Aorta (tissue), 5 donors: ENCODE measurements at regions of chr14 and their contacts with region 1.

Region 1: GRCh38 chr14:103628684-103629502 is at the start of gene KLC1:
- DNase-seq: peak; percentile 90 to 96
- ATAC-seq: peak; percentile 92
- H3K4me3 ChIP-seq: peak within 1 kb of the TSS; percentile 84 to 91
- H3K27ac ChIP-seq: peak within 1 kb of the TSS; percentile 87 to 88
- H3K4me1 ChIP-seq: no peaks in the 10 kb centered on the region
- H3K27me3 ChIP-seq: no peaks in the 10 kb centered on the region
- total RNA-seq, gene KLC1: 254 to 315 TPM

Region 2: DNA sequence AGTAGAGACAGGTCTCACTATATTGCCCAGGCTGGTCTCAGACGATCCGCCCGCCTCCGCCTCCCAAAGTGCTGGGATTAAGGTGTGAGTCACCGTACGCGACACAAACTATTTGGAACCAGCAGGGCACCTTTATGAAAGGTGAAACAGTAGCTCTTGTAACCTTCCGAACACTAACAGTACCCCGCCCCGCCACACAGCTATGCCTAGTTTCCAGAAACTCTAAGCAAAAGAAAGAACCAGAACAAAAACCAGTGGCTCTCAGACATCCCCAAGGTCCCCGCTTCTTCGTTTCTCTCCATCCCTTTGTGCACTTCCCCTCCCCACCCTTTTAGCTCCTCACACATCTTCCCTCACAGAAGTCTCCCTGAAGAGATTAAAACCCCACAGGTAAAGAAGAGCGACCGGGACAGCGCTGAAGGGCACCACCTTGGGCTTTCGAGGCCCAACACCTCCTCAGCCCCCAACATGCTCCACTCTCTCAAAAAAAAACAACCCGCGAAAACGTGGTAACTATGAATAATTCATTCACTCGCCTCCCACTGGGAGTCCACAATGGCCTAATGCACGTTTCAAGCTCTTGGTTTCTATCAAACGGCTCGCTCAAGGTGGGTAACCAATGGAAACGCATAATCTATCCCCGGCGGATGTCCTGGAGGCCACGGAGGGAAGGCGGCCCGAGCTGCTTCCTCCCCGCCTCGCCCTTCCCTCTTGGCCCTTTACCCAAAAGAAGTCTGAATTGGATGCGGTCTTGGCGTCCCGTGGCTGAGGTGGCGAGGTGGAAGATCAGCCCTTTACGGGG is 67.3 kb before region 1 on chr14:
- intact Hi-C with region 1: loop called in 1 of 2 experiments (anchors 2 kb)
- DNase-seq: peak in 1 of 2 donors; percentile 59
- ATAC-seq: peak; percentile 63
- H3K4me3 ChIP-seq: peak overlapping the region; percentile 83 to 90
- H3K27ac ChIP-seq: peak overlapping the region in 1 of 2 donors; percentile 72
- H3K4me1 ChIP-seq: no peaks in the 10 kb centered on the region
- H3K27me3 ChIP-seq: no peaks in the 10 kb centered on the region

Region 3: GRCh38 chr14:103715052-103716000 is 86.4 kb after region 1 on chr14 and contains the starts of genes XRCC3 and ZFYVE21:
- intact Hi-C with region 1: loop called in 1 of 2 experiments (anchors 5 kb)
- DNase-seq: peak; percentile 99 to 100
- ATAC-seq: peak; percentile 97
- H3K4me3 ChIP-seq: peak within 1 kb of the TSS; percentile 90 to 92
- H3K27ac ChIP-seq: peak within 1 kb of the TSS; percentile 65 to 81
- H3K4me1 ChIP-seq: no peaks in the 10 kb centered on the region
- H3K27me3 ChIP-seq: no peaks in the 10 kb centered on the region
- total RNA-seq, gene XRCC3: 5.2 to 5.3 TPM
- total RNA-seq, gene ZFYVE21: 69.0 to 74.8 TPM

Region 4: DNA sequence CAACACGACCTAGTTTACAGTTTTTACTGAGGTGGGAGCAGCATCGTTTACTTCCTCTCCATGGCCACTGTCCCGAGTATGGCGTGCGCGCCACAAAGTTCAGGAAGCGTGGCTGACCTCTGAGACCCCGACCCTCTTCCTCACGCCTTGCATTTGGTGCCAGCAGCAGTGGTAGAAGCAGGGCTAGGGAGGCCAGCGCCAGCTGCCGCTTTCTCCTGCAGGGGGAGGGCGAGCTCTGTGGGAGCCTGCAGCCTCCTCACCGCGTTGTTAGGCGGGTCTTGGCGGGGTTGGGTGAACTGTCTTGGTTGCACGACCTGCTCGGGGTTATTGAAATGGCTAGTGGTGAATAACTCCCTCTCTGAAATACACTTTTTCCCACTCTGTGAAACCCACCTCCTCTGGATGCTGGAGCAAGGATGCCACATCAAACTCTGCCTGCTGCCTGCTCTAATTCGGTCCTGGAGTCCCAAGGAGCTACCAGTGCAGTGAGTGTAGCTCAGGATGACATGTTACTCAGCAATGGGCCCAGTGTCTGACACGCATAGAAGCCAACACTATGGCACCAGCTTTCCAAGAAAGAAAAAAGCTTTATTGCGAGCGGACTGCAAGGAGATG is 277.1 kb after region 1 on chr14:
- intact Hi-C with region 1: no loop called
- DNase-seq: peak in 1 of 2 donors; percentile 35
- ATAC-seq: no peak
- H3K4me3 ChIP-seq: no peak overlapping the region
- H3K27ac ChIP-seq: no peak overlapping the region
- H3K4me1 ChIP-seq: no peaks in the 10 kb centered on the region
- H3K27me3 ChIP-seq: no peaks in the 10 kb centered on the region